AG04449 (cell line): ENCODE measurements at regions of chr9 and their contacts with region 1.

Region 1: GRCh38 chr9:16133556-16134227 is 580.8 kb downstream of the CCDC171 start:
- DNase-seq: no peak
- H3K4me3 ChIP-seq: no peak overlapping the region
- CTCF ChIP-seq: peak; percentile 40

Region 2: DNA sequence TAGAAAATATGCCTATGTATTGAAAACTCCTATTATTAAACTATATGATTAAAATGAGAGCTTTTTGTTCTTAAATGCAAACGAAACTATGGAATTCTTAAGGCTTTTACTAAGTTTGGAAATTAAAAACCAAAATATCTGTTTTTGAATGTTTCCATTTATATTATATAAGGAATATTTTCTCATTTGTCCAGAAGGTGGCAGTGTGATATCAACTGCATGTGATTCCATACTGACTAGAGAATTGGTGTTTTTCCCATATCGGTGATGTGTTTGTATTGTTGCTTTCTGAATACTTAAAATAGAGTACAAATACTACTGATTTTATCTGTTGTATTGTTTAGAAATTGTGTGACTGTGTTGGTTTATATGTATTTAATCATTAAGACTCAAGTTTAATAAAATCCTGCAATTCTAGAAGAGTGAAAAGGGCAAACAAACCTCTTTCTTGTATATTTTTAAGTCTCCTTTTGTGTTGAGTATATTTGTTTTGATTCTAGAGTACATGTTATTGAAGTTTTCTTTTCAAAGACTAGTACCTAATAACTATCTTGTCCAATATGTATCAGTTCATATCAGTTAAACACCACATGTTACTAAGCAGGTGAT is 260.0 kb before region 1 on chr9:
- CTCF ChIA-PET with region 1: interaction called, 57 read pairs
- POLR2A ChIA-PET with region 1: no interaction called
- DNase-seq: no peak
- H3K4me3 ChIP-seq: no peak overlapping the region
- CTCF ChIP-seq: peak; percentile 26

Region 3: GRCh38 chr9:16143947-16144890 is 10.5 kb after region 1 on chr9:
- CTCF ChIA-PET with region 1: interaction called, 12 read pairs
- POLR2A ChIA-PET with region 1: no interaction called
- DNase-seq: no peak
- H3K4me3 ChIP-seq: no peak overlapping the region
- CTCF ChIP-seq: no peak